WTC11 (cell line): ENCODE measurements at regions of chr3 and their contacts with region 1.

Region 1: DNA sequence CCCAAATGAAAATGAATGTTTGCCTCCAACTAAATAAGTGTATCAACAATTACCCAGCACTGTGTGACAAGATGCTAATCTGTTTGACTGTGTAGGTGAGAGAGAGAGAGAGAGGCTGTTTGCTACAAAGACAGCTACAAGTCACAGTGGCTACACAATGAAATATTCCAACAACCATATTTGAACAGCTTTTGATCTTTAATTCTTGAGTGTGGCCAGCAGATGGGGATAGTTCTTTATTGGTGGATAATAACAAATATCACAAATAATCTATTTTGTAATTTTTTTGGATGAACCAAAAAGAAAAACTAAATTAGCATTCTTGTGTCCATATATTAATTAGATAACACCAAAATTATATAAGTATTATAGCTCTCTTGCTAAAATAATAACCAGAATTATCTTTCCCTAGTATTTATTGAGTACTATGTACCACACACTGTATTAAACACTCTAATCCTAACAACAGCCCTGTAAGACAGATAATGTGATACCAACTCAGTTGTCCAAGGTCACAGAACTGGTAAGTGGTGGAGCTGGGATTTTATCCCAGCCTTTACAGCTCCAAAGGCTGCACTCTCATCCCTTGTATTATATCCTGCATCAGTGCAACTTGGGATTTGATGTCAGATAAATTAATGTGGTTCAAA is 61.9 kb upstream of the C3orf80 start:
- DNase-seq: no peak
- ATAC-seq: no peak
- H3K4me3 Mint-ChIP-seq: no peak overlapping the region
- H3K27ac Mint-ChIP-seq: no peak overlapping the region; the same call in 1 of the 2 replicates
- H3K4me1 Mint-ChIP-seq: peaks cover 36% of the 10 kb centered on the region
- H3K27me3 Mint-ChIP-seq: no peaks in the 10 kb centered on the region
- CTCF ChIP-seq: no peak

Region 2: DNA sequence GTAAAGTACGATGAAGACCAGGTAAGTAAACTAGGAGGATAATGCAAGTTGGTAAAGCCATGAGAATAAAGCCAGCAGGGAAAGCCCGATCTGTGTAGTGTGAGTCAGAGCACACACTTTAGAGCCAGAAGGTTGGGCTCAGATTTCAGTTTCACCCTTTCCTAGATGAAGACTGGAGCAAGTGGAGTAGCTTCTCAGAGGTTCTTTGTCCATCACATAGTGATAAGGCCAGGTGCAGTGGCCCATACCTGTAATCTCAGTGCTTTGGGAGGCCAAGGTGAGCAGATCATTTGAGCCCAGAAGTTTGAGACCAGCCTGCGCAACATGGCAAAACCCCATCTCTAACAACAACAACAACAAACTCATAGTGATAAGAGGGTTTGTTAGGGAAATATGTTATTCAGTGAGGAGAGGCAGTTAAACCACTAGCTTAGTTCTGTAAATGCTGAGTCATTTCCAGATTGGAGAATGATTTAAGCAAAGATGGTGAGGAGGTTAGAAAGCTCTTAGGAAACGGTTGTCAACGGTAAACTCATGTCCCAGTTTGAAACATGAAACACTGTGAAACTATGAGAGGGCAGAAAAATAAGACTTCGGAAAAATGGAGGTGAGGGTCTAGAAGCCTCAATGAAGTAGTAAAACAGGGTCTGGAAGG is 135.7 kb before region 1 on chr3:
- CTCF ChIA-PET with region 1: interaction called, 14 read pairs
- POLR2A ChIA-PET with region 1: no interaction called
- DNase-seq: no peak
- ATAC-seq: no peak
- H3K4me3 Mint-ChIP-seq: no peak overlapping the region
- H3K27ac Mint-ChIP-seq: no peak overlapping the region
- H3K4me1 Mint-ChIP-seq: no peaks in the 10 kb centered on the region
- H3K27me3 Mint-ChIP-seq: peaks cover 2% of the 10 kb centered on the region; the same call in 1 of the 2 replicates
- CTCF ChIP-seq: no peak